Activated naive CD4-positive, alpha-beta T cell treated with anti-CD3 and anti-CD28 coated beads, Interleukin-2, amount 10 ng/mL, durations not matched to agents 7 days and 5 days (primary cell): ENCODE measurements at regions of chr17 and their contacts with region 1.

Region 1: DNA sequence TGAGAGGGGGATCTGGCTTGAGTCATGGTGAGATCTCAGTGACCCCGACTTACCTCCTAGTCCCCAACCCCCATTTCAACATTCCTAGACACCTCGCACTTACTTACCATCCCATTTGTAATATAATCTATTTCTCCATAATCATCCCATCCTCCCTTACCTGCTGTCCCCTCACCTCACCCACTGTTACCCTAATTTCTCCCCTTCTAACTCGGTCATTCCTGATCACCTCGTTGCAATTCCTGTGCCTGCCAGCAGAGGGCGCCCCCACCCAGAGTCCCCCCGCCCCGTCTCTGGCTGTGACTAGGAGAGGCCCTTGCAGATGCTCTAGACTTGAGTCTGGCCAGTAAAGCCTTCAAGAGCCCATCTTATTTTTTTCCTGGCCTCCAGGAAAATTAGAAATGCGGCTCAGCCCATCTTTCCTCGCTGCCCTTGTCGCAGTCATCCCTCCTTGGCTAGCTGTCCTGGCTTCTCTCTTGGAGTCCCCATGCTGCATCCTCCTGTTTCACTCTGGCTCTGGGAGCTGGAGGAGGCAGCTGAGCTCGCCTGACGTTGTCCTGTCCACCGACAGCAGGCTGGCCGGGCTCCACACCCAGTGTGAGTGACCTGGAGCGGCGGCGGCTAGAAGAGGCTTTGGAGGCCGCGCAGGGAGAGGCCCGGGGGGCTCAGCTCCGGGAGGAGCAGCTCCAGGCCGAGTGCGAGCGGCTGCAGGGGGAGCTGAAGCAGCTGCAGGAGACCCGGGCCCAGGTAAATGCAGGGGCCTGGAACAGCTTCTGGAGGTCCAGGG is 5.0 kb downstream of the TBKBP1 start:
- DNase-seq: peak; percentile 87
- H3K4me3 Mint-ChIP-seq: no peak overlapping the region
- H3K27ac Mint-ChIP-seq: no peak overlapping the region
- H3K4me1 Mint-ChIP-seq: peaks cover 54% of the 10 kb centered on the region
- H3K27me3 Mint-ChIP-seq: peaks cover 8% of the 10 kb centered on the region

Region 2: GRCh38 chr17:47644324-47644723 is 54.6 kb before region 1 on chr17:
- CTCF ChIA-PET with region 1: no interaction called
- DNase-seq: no peak
- H3K4me3 Mint-ChIP-seq: no peak overlapping the region
- H3K27ac Mint-ChIP-seq: no peak overlapping the region
- H3K4me1 Mint-ChIP-seq: peaks cover 22% of the 10 kb centered on the region
- H3K27me3 Mint-ChIP-seq: peaks cover 1% of the 10 kb centered on the region

Region 3: GRCh38 chr17:47687748-47688147 is 11.2 kb before region 1 on chr17:
- CTCF ChIA-PET with region 1: interaction called, 11 read pairs
- DNase-seq: no peak
- H3K4me3 Mint-ChIP-seq: no peak overlapping the region
- H3K27ac Mint-ChIP-seq: no peak overlapping the region
- H3K4me1 Mint-ChIP-seq: peaks cover 11% of the 10 kb centered on the region
- H3K27me3 Mint-ChIP-seq: peaks cover 16% of the 10 kb centered on the region

Region 4: DNA sequence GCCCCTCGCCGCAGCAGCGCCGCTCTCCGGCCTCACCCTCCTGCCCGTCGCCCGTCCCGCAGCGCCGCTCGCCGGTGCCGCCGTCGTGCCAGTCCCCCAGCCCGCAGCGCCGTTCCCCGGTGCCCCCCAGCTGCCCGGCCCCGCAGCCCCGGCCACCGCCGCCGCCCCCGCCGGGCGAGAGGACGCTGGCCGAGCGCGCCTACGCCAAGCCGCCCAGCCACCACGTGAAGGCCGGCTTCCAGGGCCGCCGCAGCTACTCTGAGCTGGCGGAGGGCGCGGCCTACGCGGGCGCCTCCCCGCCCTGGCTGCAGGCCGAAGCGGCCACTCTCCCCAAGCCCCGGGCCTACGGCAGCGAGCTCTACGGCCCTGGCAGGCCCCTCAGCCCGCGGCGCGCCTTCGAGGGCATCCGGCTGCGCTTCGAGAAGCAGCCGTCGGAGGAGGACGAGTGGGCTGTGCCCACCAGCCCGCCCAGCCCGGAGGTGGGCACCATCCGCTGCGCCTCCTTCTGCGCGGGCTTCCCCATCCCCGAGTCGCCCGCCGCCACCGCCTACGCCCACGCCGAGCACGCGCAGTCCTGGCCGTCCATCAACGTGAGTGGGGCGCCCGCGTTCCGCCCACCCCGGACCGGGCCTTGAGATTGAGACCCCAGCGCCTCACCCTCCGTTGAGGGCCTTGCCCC is 10.1 kb after region 1 on chr17:
- CTCF ChIA-PET with region 1: interaction called, 83 read pairs
- DNase-seq: no peak
- H3K4me3 Mint-ChIP-seq: no peak overlapping the region
- H3K27ac Mint-ChIP-seq: no peak overlapping the region
- H3K4me1 Mint-ChIP-seq: peaks cover 57% of the 10 kb centered on the region
- H3K27me3 Mint-ChIP-seq: peaks cover 21% of the 10 kb centered on the region

Region 5: DNA sequence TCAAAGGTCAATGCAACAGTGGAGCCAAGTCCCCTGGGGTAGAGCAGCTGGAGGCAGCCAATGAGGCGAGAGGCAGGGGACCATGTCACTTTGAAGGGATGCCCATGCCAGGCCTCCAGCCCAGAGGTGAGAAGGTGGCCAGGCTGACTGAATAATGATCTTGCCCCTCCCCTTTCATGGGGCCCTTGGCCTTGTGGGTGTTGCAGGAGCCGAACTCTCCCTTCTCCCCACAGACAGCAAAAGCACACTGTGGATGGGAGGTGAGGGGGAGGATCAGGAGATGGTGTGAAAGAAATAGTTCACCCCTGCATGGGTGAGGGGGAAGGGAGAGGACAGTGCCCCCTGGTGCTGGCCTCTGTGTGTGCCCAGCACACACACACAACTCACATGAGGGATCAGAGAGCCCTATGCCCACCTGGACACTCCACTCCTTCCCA is 18.3 kb after region 1 on chr17:
- CTCF ChIA-PET with region 1: interaction called, 83 read pairs
- DNase-seq: peak; percentile 51
- H3K4me3 Mint-ChIP-seq: no peak overlapping the region
- H3K27ac Mint-ChIP-seq: peak overlapping the region; percentile 40
- H3K4me1 Mint-ChIP-seq: peaks cover 86% of the 10 kb centered on the region
- H3K27me3 Mint-ChIP-seq: peaks cover 47% of the 10 kb centered on the region

Region 6: GRCh38 chr17:47725446-47726111 is 26.6 kb after region 1 on chr17:
- CTCF ChIA-PET with region 1: interaction called, 98 read pairs
- DNase-seq: no peak
- H3K4me3 Mint-ChIP-seq: no peak overlapping the region
- H3K27ac Mint-ChIP-seq: peak overlapping the region; percentile 35
- H3K4me1 Mint-ChIP-seq: peaks cover 73% of the 10 kb centered on the region
- H3K27me3 Mint-ChIP-seq: peaks cover 9% of the 10 kb centered on the region

Region 7: DNA sequence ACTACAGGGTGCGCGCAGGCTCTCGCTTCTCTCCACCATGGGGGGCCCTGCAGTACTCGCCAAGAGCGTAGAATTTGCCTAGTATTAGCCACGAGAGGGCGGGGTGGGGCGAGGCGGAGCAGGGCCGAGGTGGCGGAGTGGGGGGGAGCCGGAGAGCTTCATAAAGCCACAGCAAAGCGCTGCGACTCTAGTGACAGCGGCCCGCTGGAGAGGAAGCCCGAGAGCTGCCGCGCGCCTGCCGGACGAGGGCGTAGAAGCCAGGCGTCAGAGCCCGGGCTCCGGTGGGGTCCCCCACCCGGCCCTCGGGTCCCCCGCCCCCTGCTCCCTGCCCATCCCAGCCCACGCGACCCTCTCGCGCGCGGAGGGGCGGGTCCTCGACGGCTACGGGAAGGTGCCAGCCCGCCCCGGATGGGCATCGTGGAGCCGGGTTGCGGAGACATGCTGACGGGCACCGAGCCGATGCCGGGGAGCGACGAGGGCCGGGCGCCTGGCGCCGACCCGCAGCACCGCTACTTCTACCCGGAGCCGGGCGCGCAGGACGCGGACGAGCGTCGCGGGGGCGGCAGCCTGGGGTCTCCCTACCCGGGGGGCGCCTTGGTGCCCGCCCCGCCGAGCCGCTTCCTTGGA is 34.2 kb after region 1 on chr17 and contains the start of gene TBX21:
- CTCF ChIA-PET with region 1: interaction called, 128 read pairs
- DNase-seq: peak; percentile 94
- H3K4me3 Mint-ChIP-seq: peak within 1 kb of the TSS; percentile 96
- H3K27ac Mint-ChIP-seq: peak within 1 kb of the TSS; percentile 93
- H3K4me1 Mint-ChIP-seq: peaks cover 76% of the 10 kb centered on the region
- H3K27me3 Mint-ChIP-seq: peaks cover 7% of the 10 kb centered on the region

Region 8: GRCh38 chr17:47742319-47743181 is 43.6 kb after region 1 on chr17:
- CTCF ChIA-PET with region 1: interaction called, 128 read pairs
- DNase-seq: peak; percentile 65
- H3K4me3 Mint-ChIP-seq: no peak overlapping the region
- H3K27ac Mint-ChIP-seq: no peak overlapping the region
- H3K4me1 Mint-ChIP-seq: peaks cover 28% of the 10 kb centered on the region
- H3K27me3 Mint-ChIP-seq: no peaks in the 10 kb centered on the region